ENCODE measurements at regions of chr3 and their contacts with region 1.

Region 1: GRCh38 chr3:71226565-71227269 is 356.8 kb downstream of the FOXP1 start:
- DNase-seq: no peak
- H3K4me3 ChIP-seq: no peak overlapping the region
- H3K27ac ChIP-seq: peak overlapping the region; percentile 71
- H3K4me1 ChIP-seq: peaks cover 54% of the 10 kb centered on the region
- H3K27me3 ChIP-seq: no peaks in the 10 kb centered on the region
- CTCF ChIP-seq: no peak

Region 2: DNA sequence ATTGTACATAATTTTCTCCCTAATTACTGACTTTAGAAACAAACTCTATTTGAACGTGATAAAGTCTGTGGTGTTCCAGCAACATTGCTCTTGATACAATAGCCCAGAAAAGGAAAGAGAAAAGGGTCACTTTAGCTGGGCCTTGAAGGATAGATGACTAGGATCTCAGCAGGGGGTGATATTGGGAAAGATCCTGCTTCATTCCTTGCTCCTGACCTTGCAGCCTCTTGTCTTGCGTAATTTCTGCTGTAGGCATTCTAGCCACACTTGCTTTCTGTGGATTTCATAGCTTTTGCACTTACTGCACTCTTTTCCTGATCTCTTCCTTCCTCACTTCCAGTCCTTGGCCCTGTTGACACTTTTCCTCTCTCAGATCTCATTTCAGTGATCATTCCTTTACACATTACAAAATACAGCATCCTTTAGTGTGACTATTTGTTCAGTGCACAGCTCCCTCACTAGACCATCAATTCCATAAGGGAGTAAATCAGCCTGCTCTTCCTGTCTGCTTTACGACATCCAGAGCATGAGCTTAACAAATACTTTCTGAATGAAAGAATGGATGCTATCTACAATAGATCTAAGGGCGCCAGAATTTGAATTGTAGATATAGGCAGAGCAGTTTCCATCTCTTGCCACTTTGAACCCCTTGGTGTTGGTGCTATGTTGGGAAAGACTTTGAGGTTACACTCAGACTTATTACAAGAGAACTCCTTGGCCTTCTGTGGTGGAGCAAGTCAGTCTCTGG is 354.6 kb before region 1 on chr3:
- CTCF ChIA-PET with region 1: no interaction called
- POLR2A ChIA-PET with region 1: no interaction called
- intact Hi-C with region 1: no loop called
- DNase-seq: no peak
- H3K4me3 ChIP-seq: no peak overlapping the region
- H3K27ac ChIP-seq: no peak overlapping the region
- H3K4me1 ChIP-seq: no peaks in the 10 kb centered on the region
- H3K27me3 ChIP-seq: no peaks in the 10 kb centered on the region
- CTCF ChIP-seq: no peak

Region 3: GRCh38 chr3:70899816-70900215 is 326.9 kb before region 1 on chr3:
- CTCF ChIA-PET with region 1: no interaction called
- POLR2A ChIA-PET with region 1: no interaction called
- intact Hi-C with region 1: no loop called
- DNase-seq: no peak
- H3K4me3 ChIP-seq: no peak overlapping the region
- H3K27ac ChIP-seq: no peak overlapping the region
- H3K4me1 ChIP-seq: no peaks in the 10 kb centered on the region
- H3K27me3 ChIP-seq: no peaks in the 10 kb centered on the region
- CTCF ChIP-seq: no peak

Region 4: GRCh38 chr3:71397046-71397445 is 170.3 kb after region 1 on chr3:
- CTCF ChIA-PET with region 1: no interaction called
- POLR2A ChIA-PET with region 1: no interaction called
- intact Hi-C with region 1: loop called (anchors 10 kb)
- DNase-seq: peak; percentile 56
- H3K4me3 ChIP-seq: no peak overlapping the region
- H3K27ac ChIP-seq: no peak overlapping the region
- H3K4me1 ChIP-seq: peaks cover 23% of the 10 kb centered on the region
- H3K27me3 ChIP-seq: no peaks in the 10 kb centered on the region
- CTCF ChIP-seq: peak; percentile 46

Measured in A673 (cell line).